Activated T-helper 1 cell treated with anti-CD3 and anti-CD28 coated beads, Interleukin-12 subunit alpha, Interleukin-12 subunit beta, Interleukin-2, Interleukin-4 antibody, amounts not matched to agents 30 ng/mL and 10 ng/mL and 1 ng/mL, durations not matched to agents 14 hours and 24 hours and 36 hours (primary cell): ENCODE measurements at regions of chr17 and their contacts with region 1.

Region 1: GRCh38 chr17:75784473-75785015 is at the start of gene UNK:
- DNase-seq: peak; percentile 94
- H3K4me3 Mint-ChIP-seq: peak within 1 kb of the TSS; percentile 92
- H3K27ac Mint-ChIP-seq: peak within 1 kb of the TSS; percentile 99
- H3K4me1 Mint-ChIP-seq: peaks cover 47% of the 10 kb centered on the region
- H3K27me3 Mint-ChIP-seq: peaks cover 2% of the 10 kb centered on the region
- total RNA-seq, gene UNK: 26.0 and 26.9 TPM in 2 replicates

Region 2: DNA sequence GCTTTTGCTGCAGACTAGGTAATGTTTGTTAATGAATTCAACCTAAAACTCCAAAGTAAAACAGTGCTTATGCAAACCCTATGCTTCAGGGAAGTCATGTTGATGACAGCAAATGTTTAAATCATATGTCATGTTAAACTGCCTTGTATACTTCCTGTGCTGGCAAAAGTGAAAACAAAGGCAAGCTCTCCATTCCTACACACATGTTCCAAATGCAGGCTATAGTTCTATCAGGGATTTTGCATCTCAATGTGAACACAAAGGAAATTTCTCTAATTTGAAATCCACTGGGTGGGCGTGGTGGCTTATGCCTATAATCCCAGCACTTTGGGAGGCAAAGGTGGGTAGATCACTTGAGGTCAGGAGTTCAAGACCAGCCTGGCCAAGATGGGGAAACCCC is 19.3 kb after region 1 on chr17:
- intact Hi-C with region 1: loop called (anchors 2 kb)
- DNase-seq: no peak
- H3K4me3 Mint-ChIP-seq: no peak overlapping the region
- H3K27ac Mint-ChIP-seq: peak overlapping the region; percentile 23
- H3K4me1 Mint-ChIP-seq: peaks cover 12% of the 10 kb centered on the region
- H3K27me3 Mint-ChIP-seq: no peaks in the 10 kb centered on the region